ENCODE measurements at regions of chr1 and their contacts with region 1.

Region 1: GRCh38 chr1:100351095-100351891 is 1.0 kb upstream of the CDC14A start:
- DNase-seq: peak; percentile 78 to 88
- H3K4me3 ChIP-seq: peak overlapping the region; percentile 63
- H3K27ac ChIP-seq: peak overlapping the region; percentile 36
- H3K4me1 ChIP-seq: peaks cover 31% of the 10 kb centered on the region
- H3K27me3 ChIP-seq: no peaks in the 10 kb centered on the region
- CTCF ChIP-seq: peak; percentile 49; the same call in 1 of the 2 replicates

Region 2: GRCh38 chr1:100037927-100038659 is 313.2 kb before region 1 on chr1:
- CTCF ChIA-PET with region 1: no interaction called
- POLR2A ChIA-PET with region 1: no interaction called
- intact Hi-C with region 1: loop called (anchors 1 kb)
- DNase-seq: peak; percentile 73 to 83
- H3K4me3 ChIP-seq: peak overlapping the region; percentile 90
- H3K27ac ChIP-seq: peak overlapping the region; percentile 84
- H3K4me1 ChIP-seq: peaks cover 33% of the 10 kb centered on the region
- H3K27me3 ChIP-seq: no peaks in the 10 kb centered on the region
- CTCF ChIP-seq: no peak; the same call in 1 of the 2 replicates

Region 3: GRCh38 chr1:100132566-100133477 is 218.5 kb before region 1 on chr1 and contains the starts of genes SASS6 and TRMT13:
- CTCF ChIA-PET with region 1: no interaction called
- POLR2A ChIA-PET with region 1: no interaction called
- intact Hi-C with region 1: loop called (anchors 2 kb)
- DNase-seq: peak; percentile 91 to 98
- H3K4me3 ChIP-seq: peak within 1 kb of the TSS; percentile 87
- H3K27ac ChIP-seq: peak within 1 kb of the TSS; percentile 40
- H3K4me1 ChIP-seq: peaks cover 34% of the 10 kb centered on the region
- H3K27me3 ChIP-seq: no peaks in the 10 kb centered on the region
- CTCF ChIP-seq: no peak
- total RNA-seq, gene SASS6: 5.1 and 8.7 TPM in 2 replicates
- total RNA-seq, gene TRMT13: 7.3 and 14.2 TPM in 2 replicates

Region 4: DNA sequence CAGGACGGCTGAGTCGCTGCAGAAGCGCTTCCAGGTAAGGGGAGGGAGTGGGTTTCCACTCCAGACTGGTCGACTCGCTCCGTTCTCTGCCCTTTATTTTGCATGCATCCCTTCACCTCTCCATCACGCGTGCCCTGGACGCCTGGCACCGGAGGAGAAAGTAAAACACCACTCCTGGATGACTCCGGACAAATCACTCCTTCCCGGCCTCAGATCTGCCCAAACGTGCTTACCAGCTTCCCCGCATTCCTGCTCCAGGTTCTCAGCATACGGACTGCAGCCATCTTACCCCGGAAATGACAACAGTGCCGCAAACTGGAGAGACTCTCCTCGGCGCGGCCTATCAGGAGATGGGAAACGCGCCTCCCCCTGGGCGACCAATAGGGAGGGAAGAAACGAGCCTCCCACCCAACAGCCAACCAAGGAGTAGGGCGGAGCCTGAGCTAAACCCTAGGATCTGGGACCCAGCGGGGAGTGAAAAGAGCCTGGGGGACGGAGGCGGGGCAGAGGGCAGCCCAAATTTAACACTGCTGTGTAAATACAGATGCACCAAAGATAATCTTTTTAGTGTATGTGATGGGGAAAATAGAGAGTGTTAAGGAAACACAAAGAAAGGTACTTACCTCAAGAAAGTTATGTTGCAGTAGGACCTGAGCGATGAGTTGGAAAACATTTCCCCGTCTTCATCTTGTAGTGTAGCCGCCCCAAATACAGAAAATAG is 101.6 kb before region 1 on chr1 and contains the start of gene DBT:
- CTCF ChIA-PET with region 1: no interaction called
- POLR2A ChIA-PET with region 1: no interaction called
- intact Hi-C with region 1: loop called (anchors 5 kb)
- DNase-seq: peak; percentile 91 to 97
- H3K4me3 ChIP-seq: peak within 1 kb of the TSS; percentile 62
- H3K27ac ChIP-seq: peak within 1 kb of the TSS; percentile 37
- H3K4me1 ChIP-seq: peaks cover 16% of the 10 kb centered on the region
- H3K27me3 ChIP-seq: no peaks in the 10 kb centered on the region
- CTCF ChIP-seq: no peak
- total RNA-seq, gene DBT: 13.9 and 16.0 TPM in 2 replicates

Region 5: DNA sequence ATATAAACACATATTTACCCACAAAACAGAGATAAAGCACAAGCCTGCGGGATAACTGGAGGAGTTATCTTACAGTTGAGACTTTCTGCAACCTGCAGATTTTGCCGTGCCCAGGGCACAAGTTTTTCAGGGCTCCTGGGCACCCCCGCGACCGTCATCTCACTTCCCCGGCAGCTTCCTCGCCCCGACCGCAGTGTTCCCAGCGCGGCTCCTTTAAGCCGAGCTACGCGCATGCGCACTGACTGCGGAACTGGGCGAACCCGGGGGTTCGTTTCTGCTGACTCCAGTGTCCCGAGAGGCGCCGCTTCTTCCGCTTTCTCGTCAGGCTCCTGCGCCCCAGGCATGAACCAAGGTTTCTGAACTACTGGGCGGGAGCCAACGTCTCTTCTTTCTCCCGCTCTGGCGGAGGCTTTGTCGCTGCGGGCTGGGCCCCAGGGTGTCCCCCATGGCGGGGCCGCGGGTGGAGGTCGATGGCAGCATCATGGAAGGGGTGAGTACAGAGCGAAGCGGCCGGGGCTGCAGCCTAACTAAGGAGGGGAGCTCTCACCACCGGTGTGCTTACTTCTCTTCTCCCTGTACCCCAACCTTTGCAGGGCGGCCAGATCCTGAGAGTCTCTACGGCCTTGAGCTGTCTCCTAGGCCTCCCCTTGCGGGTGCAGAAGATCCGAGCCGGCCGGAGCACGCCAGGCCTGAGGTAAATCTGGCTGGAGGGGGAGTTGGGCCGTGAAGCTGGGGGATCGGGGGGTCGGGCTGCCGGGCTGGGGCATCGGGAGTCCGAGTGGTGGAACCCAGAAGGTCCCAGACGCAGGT is 85.2 kb before region 1 on chr1 and contains the start of gene RTCA:
- CTCF ChIA-PET with region 1: no interaction called
- POLR2A ChIA-PET with region 1: no interaction called
- intact Hi-C with region 1: loop called (anchors 1 kb)
- DNase-seq: peak; percentile 91 to 92
- H3K4me3 ChIP-seq: peak within 1 kb of the TSS; percentile 76
- H3K27ac ChIP-seq: peak within 1 kb of the TSS; percentile 44
- H3K4me1 ChIP-seq: peaks cover 14% of the 10 kb centered on the region
- H3K27me3 ChIP-seq: no peaks in the 10 kb centered on the region
- CTCF ChIP-seq: no peak
- total RNA-seq, gene RTCA: 32.9 and 38.1 TPM in 2 replicates

Region 6: GRCh38 chr1:100308777-100309176 is 42.5 kb before region 1 on chr1:
- CTCF ChIA-PET with region 1: no interaction called
- POLR2A ChIA-PET with region 1: no interaction called
- intact Hi-C with region 1: loop called (anchors 10 kb)
- DNase-seq: no peak
- H3K4me3 ChIP-seq: no peak overlapping the region
- H3K27ac ChIP-seq: no peak overlapping the region
- H3K4me1 ChIP-seq: no peaks in the 10 kb centered on the region
- H3K27me3 ChIP-seq: no peaks in the 10 kb centered on the region
- CTCF ChIP-seq: no peak

Measured in PC-9 (cell line).